A549 (cell line): ENCODE measurements at regions of chr21 and their contacts with region 1.

Region 1: DNA sequence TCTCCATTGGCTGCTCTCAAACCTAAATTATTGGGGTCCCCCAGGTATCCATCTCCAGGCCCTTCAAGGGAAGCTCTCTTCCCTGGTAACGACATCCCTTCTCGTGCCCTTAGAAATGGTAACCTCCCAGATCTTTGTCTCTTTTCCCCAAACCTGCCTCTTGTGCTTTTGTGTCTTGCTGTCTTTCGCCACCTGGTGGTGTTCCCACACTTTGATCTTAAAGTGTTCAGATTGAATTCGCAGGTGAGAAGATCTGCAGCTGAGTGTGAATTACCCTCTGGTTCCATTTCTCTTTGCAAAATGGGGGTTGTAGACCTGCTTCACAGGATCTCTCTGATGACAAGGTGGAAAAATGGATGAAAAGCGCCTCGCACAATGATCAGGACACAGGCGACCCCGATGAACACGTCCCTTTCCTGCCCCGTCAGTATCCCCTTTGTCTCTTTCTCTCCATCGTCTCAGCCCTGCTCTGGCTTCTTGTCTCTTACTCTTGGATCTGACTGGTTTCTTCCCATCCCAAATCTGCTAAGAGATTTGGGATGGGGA is 53.1 kb downstream of the DOP1B start:
- DNase-seq: peak in 1 of 2 experiments; percentile 81
- ATAC-seq: peak; percentile 82 to 86
- H3K4me3 ChIP-seq: no peak overlapping the region
- H3K27ac ChIP-seq: peak overlapping the region; percentile 85 to 87
- H3K4me1 ChIP-seq: peaks cover 33% of the 10 kb centered on the region
- CTCF ChIP-seq: peak; percentile 73
- EP300 ChIP-seq: no peak
- POLR2A ChIP-seq: no peak
- RAD21 ChIP-seq: peak; percentile 80 to 83

Region 2: GRCh38 chr21:36141513-36141925 is 68.2 kb before region 1 on chr21:
- CTCF ChIA-PET with region 1: interaction called, 75 read pairs
- POLR2A ChIA-PET with region 1: no interaction called
- DNase-seq: peak; percentile 33 to 87
- ATAC-seq: peak; percentile 98
- H3K4me3 ChIP-seq: no peak overlapping the region
- H3K27ac ChIP-seq: no peak overlapping the region
- H3K4me1 ChIP-seq: peaks cover 10% of the 10 kb centered on the region; the same call in 2 of the 3 replicates
- CTCF ChIP-seq: peak; percentile 80
- EP300 ChIP-seq: no peak
- POLR2A ChIP-seq: no peak
- RAD21 ChIP-seq: peak; percentile 79 to 80

Region 3: GRCh38 chr21:36149788-36150711 is 59.6 kb before region 1 on chr21:
- CTCF ChIA-PET with region 1: interaction called, 55 read pairs
- POLR2A ChIA-PET with region 1: no interaction called
- DNase-seq: no peak
- ATAC-seq: no peak
- H3K4me3 ChIP-seq: no peak overlapping the region
- H3K27ac ChIP-seq: no peak overlapping the region
- H3K4me1 ChIP-seq: no peaks in the 10 kb centered on the region
- CTCF ChIP-seq: no peak
- EP300 ChIP-seq: no peak
- POLR2A ChIP-seq: no peak
- RAD21 ChIP-seq: no peak

Region 4: GRCh38 chr21:36156339-36156814 is 53.3 kb before region 1 on chr21:
- CTCF ChIA-PET with region 1: interaction called, 55 read pairs
- POLR2A ChIA-PET with region 1: no interaction called
- DNase-seq: peak; percentile 73 to 98
- ATAC-seq: peak; percentile 89 to 95
- H3K4me3 ChIP-seq: peak overlapping the region; percentile 71
- H3K27ac ChIP-seq: peak overlapping the region in 1 of 2 experiments; percentile 88; a peak in 3 of 6 replicates
- H3K4me1 ChIP-seq: peaks cover 9% of the 10 kb centered on the region; the same call in 1 of the 3 replicates
- CTCF ChIP-seq: no peak
- EP300 ChIP-seq: no peak
- POLR2A ChIP-seq: no peak
- RAD21 ChIP-seq: no peak

Region 5: DNA sequence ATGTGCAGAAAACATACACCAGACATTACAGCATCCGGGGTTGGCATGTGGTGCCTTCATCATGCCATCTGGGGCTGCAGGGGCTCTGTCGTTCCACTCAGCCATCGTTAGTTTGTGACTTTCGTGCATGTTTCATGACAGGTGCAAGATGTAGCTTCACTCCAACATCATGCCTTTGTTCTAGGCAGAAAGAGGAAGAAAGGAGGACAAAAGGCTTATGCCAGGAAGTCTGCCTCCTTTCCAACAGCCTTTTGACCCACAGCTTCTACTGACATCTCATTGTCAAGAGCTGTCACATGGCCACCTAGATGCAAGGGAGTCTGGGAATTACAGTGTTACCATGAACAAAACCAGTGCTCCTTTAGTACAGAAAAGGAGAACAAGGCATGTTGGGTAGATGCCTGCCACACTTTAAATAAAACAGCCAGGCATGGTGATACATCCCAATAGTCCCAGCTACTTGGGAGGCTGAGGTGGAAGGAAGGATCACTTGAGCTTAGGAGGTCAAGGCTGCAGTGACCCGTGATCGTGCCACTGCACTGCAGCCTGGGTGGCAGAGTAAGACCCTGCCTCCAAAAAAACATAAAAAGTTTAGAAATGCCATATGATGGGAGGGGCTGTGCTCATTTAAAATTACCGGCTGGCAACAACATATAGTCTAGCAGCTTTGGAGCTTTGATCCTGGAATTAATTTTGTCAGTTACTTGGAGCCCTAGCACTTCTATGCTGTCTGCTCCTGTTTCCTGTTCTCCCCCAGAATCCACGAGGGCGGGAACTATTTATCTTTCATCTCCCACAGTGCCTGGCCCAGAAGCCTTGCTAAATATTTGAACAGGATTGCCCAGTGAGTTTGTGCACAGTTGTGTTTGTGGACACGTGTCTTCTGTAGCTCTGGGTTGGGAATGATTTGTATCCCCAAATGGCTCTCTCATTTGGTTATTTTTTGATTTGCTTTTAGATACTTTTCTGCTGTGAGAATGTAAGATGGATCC is 45.7 kb before region 1 on chr21:
- CTCF ChIA-PET with region 1: interaction called, 10 read pairs
- POLR2A ChIA-PET with region 1: no interaction called
- DNase-seq: no peak
- ATAC-seq: no peak; a peak in 1 of 6 replicates
- H3K4me3 ChIP-seq: no peak overlapping the region
- H3K27ac ChIP-seq: no peak overlapping the region
- H3K4me1 ChIP-seq: peaks cover 13% of the 10 kb centered on the region
- CTCF ChIP-seq: no peak
- EP300 ChIP-seq: no peak
- POLR2A ChIP-seq: no peak
- RAD21 ChIP-seq: no peak

Region 6: DNA sequence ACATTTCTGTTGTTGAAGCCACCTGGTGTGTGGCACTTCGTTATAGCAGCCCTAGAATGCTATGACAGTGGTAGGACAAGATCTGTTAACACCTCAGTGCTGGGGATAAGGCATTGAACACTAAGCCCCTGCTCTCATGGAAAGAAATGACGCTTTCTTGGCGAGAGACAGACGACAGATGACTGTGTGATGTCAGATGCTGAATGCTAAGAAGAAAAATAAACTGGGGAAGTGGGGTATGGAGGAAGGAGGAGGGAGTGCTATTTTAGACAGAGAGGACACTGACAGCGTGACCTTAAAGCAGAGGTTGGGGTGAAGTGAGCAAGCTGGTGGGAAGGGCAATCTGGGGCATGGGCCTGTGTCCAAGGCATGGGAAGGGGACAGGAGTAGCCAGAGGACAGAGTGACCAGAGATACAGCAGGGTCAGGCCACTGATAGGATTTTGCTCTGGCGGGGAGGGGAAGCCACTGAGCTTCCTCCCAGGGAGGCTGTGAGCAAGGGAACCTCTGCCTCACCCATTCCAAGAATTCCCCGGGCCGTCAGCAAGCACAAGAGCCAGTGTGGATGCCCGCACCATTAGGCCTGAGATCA is 37.9 kb before region 1 on chr21:
- CTCF ChIA-PET with region 1: interaction called, 10 read pairs
- POLR2A ChIA-PET with region 1: no interaction called
- DNase-seq: no peak
- ATAC-seq: no peak
- H3K4me3 ChIP-seq: no peak overlapping the region
- H3K27ac ChIP-seq: no peak overlapping the region
- H3K4me1 ChIP-seq: no peaks in the 10 kb centered on the region
- CTCF ChIP-seq: no peak
- EP300 ChIP-seq: no peak
- POLR2A ChIP-seq: no peak
- RAD21 ChIP-seq: no peak

Region 7: GRCh38 chr21:36510114-36510655 is 300.5 kb after region 1 on chr21:
- CTCF ChIA-PET with region 1: no interaction called
- POLR2A ChIA-PET with region 1: no interaction called
- DNase-seq: no peak
- ATAC-seq: no peak
- H3K4me3 ChIP-seq: no peak overlapping the region
- H3K27ac ChIP-seq: no peak overlapping the region
- H3K4me1 ChIP-seq: no peaks in the 10 kb centered on the region; the same call in 2 of the 3 replicates
- CTCF ChIP-seq: no peak
- EP300 ChIP-seq: no peak
- POLR2A ChIP-seq: no peak
- RAD21 ChIP-seq: no peak